Breast epithelium (tissue), 4 donors: ENCODE measurements at regions of chr3 and their contacts with region 1.

Region 1: GRCh38 chr3:104642827-104643226 is 723.9 kb upstream of the ALCAM start:
- DNase-seq: no peak
- H3K4me3 ChIP-seq: no peak overlapping the region
- H3K27ac ChIP-seq: no peak overlapping the region
- H3K4me1 ChIP-seq: no peaks in the 10 kb centered on the region
- H3K27me3 ChIP-seq: no peaks in the 10 kb centered on the region
- CTCF ChIP-seq: no peak
- POLR2A ChIP-seq: no peak

Region 2: GRCh38 chr3:104088738-104089137 is 554.1 kb before region 1 on chr3:
- intact Hi-C with region 1: loop called (anchors 5 kb)
- DNase-seq: no peak
- H3K4me3 ChIP-seq: no peak overlapping the region
- H3K27ac ChIP-seq: no peak overlapping the region
- H3K4me1 ChIP-seq: no peaks in the 10 kb centered on the region
- H3K27me3 ChIP-seq: no peaks in the 10 kb centered on the region
- CTCF ChIP-seq: no peak
- POLR2A ChIP-seq: no peak